ENCODE measurements at regions of chr12 and their contacts with region 1.

Region 1: GRCh38 chr12:49375406-49375805 is 8.1 kb downstream of the SPATS2 start:
- DNase-seq: no peak
- H3K4me3 ChIP-seq: no peak overlapping the region
- H3K27ac ChIP-seq: no peak overlapping the region
- H3K27me3 ChIP-seq: no peaks in the 10 kb centered on the region
- CTCF ChIP-seq: no peak

Region 2: DNA sequence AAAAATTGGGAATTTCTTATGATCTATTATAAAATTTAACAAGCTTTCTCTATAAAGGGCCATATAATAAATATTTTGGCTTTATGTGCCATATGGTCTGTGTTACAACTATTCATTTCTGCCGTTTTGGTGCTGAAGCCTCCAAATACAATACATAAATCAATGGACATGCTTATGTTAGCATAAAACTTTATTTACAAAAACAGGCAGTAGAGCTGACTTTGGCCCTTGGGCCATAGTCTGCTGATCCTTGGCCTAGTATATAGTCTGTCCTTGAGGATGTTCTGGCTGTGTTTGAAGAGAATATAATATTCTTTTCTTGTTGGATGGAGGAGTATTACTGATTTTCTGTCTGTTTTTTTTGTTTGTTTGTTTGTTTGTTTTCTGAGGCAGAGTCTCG is 73.4 kb after region 1 on chr12:
- CTCF ChIA-PET with region 1: no interaction called
- POLR2A ChIA-PET with region 1: interaction called, 10 read pairs
- DNase-seq: no peak
- H3K4me3 ChIP-seq: no peak overlapping the region
- H3K27ac ChIP-seq: no peak overlapping the region
- H3K27me3 ChIP-seq: no peaks in the 10 kb centered on the region
- CTCF ChIP-seq: no peak

Measured in AG04450 (cell line).